CD4-positive, alpha-beta T cell (primary cell): ENCODE measurements at regions of chr2 and their contacts with region 1.

Region 1: DNA sequence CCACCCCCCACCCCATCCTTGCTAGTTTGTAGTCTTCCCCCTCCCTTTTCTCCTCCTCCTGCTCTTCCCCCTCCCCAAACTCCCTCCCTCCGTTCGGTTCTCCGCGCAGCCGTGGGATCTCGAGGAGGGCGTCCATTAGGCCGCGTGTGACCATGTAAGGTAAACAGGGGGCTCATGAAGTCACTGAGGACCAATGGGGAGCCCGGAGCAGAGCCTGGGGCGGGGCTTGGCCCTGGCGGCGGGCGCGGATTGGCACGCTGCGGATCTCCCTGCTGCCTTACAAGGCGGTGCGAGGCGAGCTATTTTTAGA is 246 bp upstream of the KLF7 start:
- DNase-seq: peak; percentile 89 to 97 (median 95)
- ATAC-seq: peak; percentile 88
- H3K4me3 ChIP-seq: peak overlapping the region; percentile 71
- H3K4me3 Mint-ChIP-seq: peak overlapping the region; percentile 99
- H3K27ac ChIP-seq: peak overlapping the region; percentile 95 to 99
- H3K27ac Mint-ChIP-seq: peak overlapping the region; percentile 97
- H3K4me1 ChIP-seq: peaks cover 37% of the 10 kb centered on the region
- H3K4me1 Mint-ChIP-seq: peaks cover 53% of the 10 kb centered on the region
- H3K27me3 ChIP-seq: no peaks in the 10 kb centered on the region
- H3K27me3 Mint-ChIP-seq: no peaks in the 10 kb centered on the region
- CTCF ChIP-seq: no peak

Region 2: GRCh38 chr2:206765242-206766056 is 400.5 kb before region 1 on chr2 and contains the starts of genes FASTKD2 and MDH1B:
- CTCF ChIA-PET with region 1: no interaction called
- POLR2A ChIA-PET with region 1: interaction called, 13 read pairs
- intact Hi-C with region 1: loop called in 1 of 2 experiments (anchors 5 kb)
- DNase-seq: peak; percentile 63 to 94 (median 74)
- ATAC-seq: peak; percentile 89
- H3K4me3 ChIP-seq: peak within 1 kb of the TSS; percentile 71
- H3K4me3 Mint-ChIP-seq: peak within 1 kb of the TSS; percentile 96
- H3K27ac ChIP-seq: peak within 1 kb of the TSS; percentile 80 to 85
- H3K27ac Mint-ChIP-seq: peak within 1 kb of the TSS; percentile 97
- H3K4me1 ChIP-seq: peaks cover 16% of the 10 kb centered on the region
- H3K4me1 Mint-ChIP-seq: peaks cover 46% of the 10 kb centered on the region
- H3K27me3 ChIP-seq: peaks cover 0 to 13% of the 10 kb centered on the region in 2 experiments
- H3K27me3 Mint-ChIP-seq: peaks cover 5% of the 10 kb centered on the region
- CTCF ChIP-seq: no peak
- total RNA-seq, gene FASTKD2: 24.9 to 25.7 TPM
- total RNA-seq, gene MDH1B: 0.25 to 0.31 TPM

Region 3: DNA sequence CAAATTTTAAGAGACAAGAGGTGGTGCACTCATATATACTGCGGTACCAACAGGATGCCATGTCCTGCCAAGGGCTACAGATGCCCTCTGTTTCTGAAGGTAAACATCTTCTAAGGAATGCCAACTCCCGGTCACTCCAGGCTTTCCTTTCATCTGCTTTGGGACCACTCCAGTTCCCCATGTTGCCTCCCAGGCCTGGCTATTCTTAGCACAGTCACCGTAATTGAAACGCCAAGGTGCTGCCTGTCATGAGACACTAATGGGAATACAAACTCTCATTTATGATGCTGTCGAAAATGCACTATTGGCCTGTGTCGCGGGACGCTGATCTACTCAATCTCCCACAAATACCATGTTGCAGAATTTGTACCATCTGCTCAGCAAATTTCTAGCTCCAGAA is 79.9 kb before region 1 on chr2:
- CTCF ChIA-PET with region 1: no interaction called
- POLR2A ChIA-PET with region 1: interaction called, 25 read pairs
- intact Hi-C with region 1: loop called (anchors 5 kb)
- DNase-seq: no peak
- ATAC-seq: no peak
- H3K4me3 ChIP-seq: no peak overlapping the region
- H3K4me3 Mint-ChIP-seq: no peak overlapping the region
- H3K27ac ChIP-seq: no peak overlapping the region
- H3K27ac Mint-ChIP-seq: no peak overlapping the region
- H3K4me1 ChIP-seq: peaks cover 8% of the 10 kb centered on the region
- H3K4me1 Mint-ChIP-seq: peaks cover 33% of the 10 kb centered on the region
- H3K27me3 ChIP-seq: no peaks in the 10 kb centered on the region
- H3K27me3 Mint-ChIP-seq: no peaks in the 10 kb centered on the region
- CTCF ChIP-seq: no peak

Region 4: DNA sequence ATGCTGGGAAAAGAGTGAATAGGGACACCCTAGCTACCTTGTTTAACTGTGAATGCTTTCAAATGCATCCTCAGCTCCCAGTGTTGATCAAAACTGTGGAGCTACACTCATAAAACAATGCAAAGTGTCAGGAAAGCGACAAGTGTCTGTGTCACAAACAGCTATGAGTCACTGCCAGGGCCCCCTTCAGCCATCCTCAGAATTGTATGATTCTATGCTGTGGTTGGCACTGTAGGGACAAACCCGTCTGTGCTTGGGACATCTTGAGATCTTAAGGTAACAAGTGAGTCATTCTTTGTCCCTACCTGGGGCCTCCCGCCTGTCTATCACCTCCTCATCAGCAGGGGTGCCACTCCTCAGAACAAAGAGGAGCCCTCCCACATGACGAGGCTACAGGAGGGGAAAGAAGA is 42.7 kb before region 1 on chr2:
- CTCF ChIA-PET with region 1: interaction called, 3 read pairs
- POLR2A ChIA-PET with region 1: interaction called, 19 read pairs
- intact Hi-C with region 1: loop called in 1 of 2 experiments (anchors 5 kb)
- DNase-seq: peak in 6 of 14 experiments; percentile 4 to 63 (median 31)
- ATAC-seq: peak; percentile 70
- H3K4me3 ChIP-seq: no peak overlapping the region
- H3K4me3 Mint-ChIP-seq: no peak overlapping the region
- H3K27ac ChIP-seq: no peak overlapping the region
- H3K27ac Mint-ChIP-seq: no peak overlapping the region
- H3K4me1 ChIP-seq: no peaks in the 10 kb centered on the region
- H3K4me1 Mint-ChIP-seq: peaks cover 60% of the 10 kb centered on the region
- H3K27me3 ChIP-seq: no peaks in the 10 kb centered on the region
- H3K27me3 Mint-ChIP-seq: no peaks in the 10 kb centered on the region
- CTCF ChIP-seq: no peak

Region 5: DNA sequence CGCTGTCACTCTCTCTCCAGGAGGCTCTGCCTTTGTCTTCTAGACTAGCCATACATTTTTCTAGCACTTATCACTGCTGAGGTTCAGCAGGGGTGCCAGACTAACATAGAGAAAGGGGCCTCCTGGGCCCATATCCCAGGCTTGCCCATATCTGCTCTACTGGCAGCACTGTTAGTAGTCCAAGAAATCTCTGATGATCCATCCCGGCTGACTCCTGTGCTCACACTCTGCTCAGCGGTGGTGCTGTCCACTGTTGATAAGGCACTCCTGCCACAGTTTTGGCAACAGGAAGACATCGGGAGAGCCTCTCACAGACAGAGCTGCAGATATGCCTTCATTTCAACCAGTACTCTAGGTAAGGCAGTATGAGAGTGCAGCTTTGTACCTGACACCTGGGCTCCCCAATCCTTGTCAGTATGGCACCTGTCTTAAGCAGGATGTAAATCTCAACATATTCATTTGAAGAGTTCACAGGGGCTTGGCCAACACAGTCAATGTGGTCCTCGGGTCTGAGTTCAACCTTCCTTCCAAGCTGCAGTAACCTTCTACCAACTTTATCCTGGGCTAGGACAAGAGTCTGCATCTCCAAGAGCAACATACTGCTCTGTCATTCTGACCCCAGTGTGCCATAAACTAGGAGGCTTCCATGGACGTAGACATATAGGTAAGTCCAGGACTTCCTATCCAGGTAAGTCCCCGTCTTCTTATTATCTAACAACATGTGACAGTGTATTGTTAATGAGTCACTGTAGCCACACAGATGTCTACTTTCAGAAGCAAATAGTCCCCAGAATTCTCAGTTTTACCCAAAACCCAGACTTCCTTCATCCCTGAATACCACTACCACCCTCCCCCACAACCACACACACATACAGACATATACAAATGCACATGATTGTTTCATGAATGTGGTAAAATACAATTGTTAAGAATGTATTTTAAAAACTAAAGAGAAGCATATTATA is 16.5 kb before region 1 on chr2:
- CTCF ChIA-PET with region 1: interaction called, 44 read pairs
- POLR2A ChIA-PET with region 1: interaction called, 463 read pairs
- intact Hi-C with region 1: loop called in 1 of 2 experiments (anchors 2 kb)
- DNase-seq: no peak
- ATAC-seq: peak; percentile 41
- H3K4me3 ChIP-seq: no peak overlapping the region
- H3K4me3 Mint-ChIP-seq: peak overlapping the region; percentile 5
- H3K27ac ChIP-seq: no peak overlapping the region
- H3K27ac Mint-ChIP-seq: peak overlapping the region; percentile 64
- H3K4me1 ChIP-seq: peaks cover 24% of the 10 kb centered on the region
- H3K4me1 Mint-ChIP-seq: peaks cover 73% of the 10 kb centered on the region
- H3K27me3 ChIP-seq: no peaks in the 10 kb centered on the region
- H3K27me3 Mint-ChIP-seq: no peaks in the 10 kb centered on the region
- CTCF ChIP-seq: no peak

Region 6: GRCh38 chr2:207710814-207711740 is 545.1 kb after region 1 on chr2 and contains the start of gene CCNYL1:
- CTCF ChIA-PET with region 1: no interaction called
- POLR2A ChIA-PET with region 1: interaction called, 3 read pairs
- intact Hi-C with region 1: loop called in 1 of 2 experiments (anchors 5 kb)
- DNase-seq: peak; percentile 95 to 99 (median 97)
- ATAC-seq: peak; percentile 97
- H3K4me3 ChIP-seq: peak within 1 kb of the TSS; percentile 98
- H3K4me3 Mint-ChIP-seq: peak within 1 kb of the TSS; percentile 95
- H3K27ac ChIP-seq: peak within 1 kb of the TSS; percentile 49 to 75
- H3K27ac Mint-ChIP-seq: peak within 1 kb of the TSS; percentile 82
- H3K4me1 ChIP-seq: peaks cover 23% of the 10 kb centered on the region
- H3K4me1 Mint-ChIP-seq: peaks cover 23% of the 10 kb centered on the region
- H3K27me3 ChIP-seq: no peaks in the 10 kb centered on the region
- H3K27me3 Mint-ChIP-seq: no peaks in the 10 kb centered on the region
- CTCF ChIP-seq: no peak
- total RNA-seq, gene CCNYL1: 8.7 to 11.1 TPM